Heart left ventricle (tissue), 16 donors: ENCODE measurements at regions of chr10 and their contacts with region 1.

Region 1: DNA sequence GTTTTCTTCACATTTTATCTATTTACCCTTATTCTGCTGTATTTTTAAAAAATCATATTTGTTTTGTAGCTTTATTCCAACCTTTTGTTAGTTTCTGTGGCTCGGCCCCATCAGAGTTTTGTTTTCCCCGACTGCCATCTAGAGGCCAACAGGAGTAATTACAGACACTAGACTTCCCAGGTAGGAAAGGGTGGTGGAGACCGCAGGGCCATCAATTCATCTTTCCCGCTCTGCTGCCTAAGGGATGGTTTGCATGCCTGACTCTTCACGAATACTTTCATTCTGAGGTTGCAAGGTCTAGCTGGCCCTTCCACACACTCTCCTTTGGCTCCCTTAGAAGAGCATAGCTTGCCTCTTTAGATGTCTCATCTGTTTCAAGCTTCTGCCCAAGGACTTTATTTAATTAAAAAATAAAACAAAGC is 38.3 kb downstream of the LYZL2 start:
- DNase-seq: peak in 2 of 5 donors; percentile 21 to 30
- ATAC-seq: peak in 2 of 4 donors; percentile 66 to 70
- H3K4me3 ChIP-seq: no peak overlapping the region
- H3K27ac ChIP-seq: no peak overlapping the region
- H3K4me1 ChIP-seq: peaks cover 0 to 26% (median 0%) of the 10 kb centered on the region in 12 donors
- H3K27me3 ChIP-seq: peaks cover 0 to 8% (median 0%) of the 10 kb centered on the region in 9 donors
- CTCF ChIP-seq: peak; percentile 70 to 94 (median 79)
- POLR2A ChIP-seq: no peak

Region 2: GRCh38 chr10:29987471-29987870 is 603.8 kb before region 1 on chr10:
- intact Hi-C with region 1: loop called in 3 of 10 experiments (anchors 5 to 10 kb)
- DNase-seq: no peak
- ATAC-seq: no peak
- H3K4me3 ChIP-seq: no peak overlapping the region
- H3K27ac ChIP-seq: no peak overlapping the region
- H3K4me1 ChIP-seq: no peaks in the 10 kb centered on the region
- H3K27me3 ChIP-seq: no peaks in the 10 kb centered on the region
- CTCF ChIP-seq: no peak
- POLR2A ChIP-seq: no peak

Region 3: DNA sequence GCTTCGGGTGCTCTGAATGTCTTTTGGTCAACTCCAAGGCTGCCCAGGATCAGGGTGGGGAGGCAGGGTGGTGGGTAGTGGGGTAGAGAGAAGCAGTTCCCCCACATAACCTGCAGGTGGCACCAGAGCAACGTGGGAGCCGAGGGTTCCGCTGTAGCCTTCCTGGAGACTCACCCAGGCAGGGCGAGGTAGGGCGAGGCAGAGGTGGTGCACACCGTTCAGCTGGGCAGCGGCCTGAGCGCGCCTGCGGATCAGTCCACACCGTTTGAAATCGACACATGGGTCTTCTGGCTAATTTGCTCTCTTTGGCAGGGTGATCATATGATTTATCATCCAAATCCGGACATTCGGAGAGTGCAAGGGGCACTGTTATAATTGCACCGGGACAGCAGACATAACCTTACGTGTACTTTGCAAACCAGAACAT is 198.7 kb before region 1 on chr10:
- intact Hi-C with region 1: loop called (anchors 1 to 5 kb)
- DNase-seq: peak; percentile 63 to 87 (median 73)
- ATAC-seq: peak; percentile 86 to 99 (median 99)
- H3K4me3 ChIP-seq: peak overlapping the region in 2 of 12 donors; percentile 20 to 40
- H3K27ac ChIP-seq: no peak overlapping the region
- H3K4me1 ChIP-seq: peaks cover 0 to 14% (median 4%) of the 10 kb centered on the region in 12 donors
- H3K27me3 ChIP-seq: no peaks in the 10 kb centered on the region
- CTCF ChIP-seq: peak; percentile 86 to 98 (median 94)
- POLR2A ChIP-seq: no peak

Region 4: GRCh38 chr10:30413996-30414576 is 177.2 kb before region 1 on chr10:
- intact Hi-C with region 1: loop called in 5 of 10 experiments (anchors 5 kb)
- DNase-seq: no peak
- ATAC-seq: peak; percentile 53 to 83 (median 74)
- H3K4me3 ChIP-seq: no peak overlapping the region
- H3K27ac ChIP-seq: no peak overlapping the region
- H3K4me1 ChIP-seq: peaks cover 0 to 24% (median 0%) of the 10 kb centered on the region in 12 donors
- H3K27me3 ChIP-seq: no peaks in the 10 kb centered on the region
- CTCF ChIP-seq: peak; percentile 72 to 86 (median 76)
- POLR2A ChIP-seq: no peak

Region 5: DNA sequence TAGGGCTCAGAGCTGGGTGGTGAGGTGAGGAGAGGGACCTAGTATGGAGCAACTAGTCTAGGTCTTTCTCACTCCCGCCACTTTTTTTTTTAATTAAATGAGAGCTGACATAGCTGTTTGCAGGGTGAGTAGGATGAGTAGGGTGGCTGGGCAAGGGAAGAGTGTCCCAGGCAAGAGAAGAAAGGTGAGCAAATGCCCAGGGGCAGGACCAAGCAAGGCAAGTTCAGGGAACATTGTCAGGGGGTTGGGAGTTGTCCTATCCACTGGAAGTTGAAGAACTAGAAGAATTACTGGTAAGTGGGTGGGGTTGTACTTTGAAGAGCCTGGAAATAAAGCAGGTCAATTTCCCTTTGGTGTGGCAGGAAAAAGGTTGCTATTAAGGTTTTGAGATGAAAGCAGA is 117.5 kb before region 1 on chr10:
- intact Hi-C with region 1: loop called in 1 of 10 experiments (anchors 2 kb)
- DNase-seq: no peak
- ATAC-seq: no peak
- H3K4me3 ChIP-seq: no peak overlapping the region
- H3K27ac ChIP-seq: no peak overlapping the region
- H3K4me1 ChIP-seq: peaks cover 0 to 5% (median 0%) of the 10 kb centered on the region in 12 donors
- H3K27me3 ChIP-seq: no peaks in the 10 kb centered on the region
- CTCF ChIP-seq: no peak
- POLR2A ChIP-seq: no peak

Region 6: GRCh38 chr10:30687698-30688219 is 96.5 kb after region 1 on chr10:
- intact Hi-C with region 1: no loop called
- DNase-seq: peak; percentile 54 to 83 (median 62)
- ATAC-seq: peak in 3 of 4 donors; percentile 71 to 76 (median 74)
- H3K4me3 ChIP-seq: no peak overlapping the region
- H3K27ac ChIP-seq: no peak overlapping the region
- H3K4me1 ChIP-seq: peaks cover 0 to 3% (median 0%) of the 10 kb centered on the region in 12 donors
- H3K27me3 ChIP-seq: peaks cover 0 to 24% (median 0%) of the 10 kb centered on the region in 9 donors
- CTCF ChIP-seq: peak; percentile 63 to 95 (median 83)
- POLR2A ChIP-seq: no peak